K562 (cell line): ENCODE measurements at regions of chr7 and their contacts with region 1.

Region 1: GRCh38 chr7:92634924-92635519 is 44.8 kb upstream of the FAM133B start:
- DNase-seq: peak in 1 of 4 experiments; percentile 43
- ATAC-seq: peak; percentile 41
- H3K4me3 ChIP-seq: no peak overlapping the region
- H3K27ac ChIP-seq: peak overlapping the region; percentile 33; the same call in 2 of the 3 replicates
- H3K4me1 ChIP-seq: peaks cover 0 to 29% of the 10 kb centered on the region in 2 experiments; a peak in 3 of 5 replicates
- H3K27me3 ChIP-seq: no peaks in the 10 kb centered on the region
- CTCF ChIP-seq: no peak
- EP300 ChIP-seq: no peak
- POLR2A ChIP-seq: no peak
- RAD21 ChIP-seq: no peak

Region 2: DNA sequence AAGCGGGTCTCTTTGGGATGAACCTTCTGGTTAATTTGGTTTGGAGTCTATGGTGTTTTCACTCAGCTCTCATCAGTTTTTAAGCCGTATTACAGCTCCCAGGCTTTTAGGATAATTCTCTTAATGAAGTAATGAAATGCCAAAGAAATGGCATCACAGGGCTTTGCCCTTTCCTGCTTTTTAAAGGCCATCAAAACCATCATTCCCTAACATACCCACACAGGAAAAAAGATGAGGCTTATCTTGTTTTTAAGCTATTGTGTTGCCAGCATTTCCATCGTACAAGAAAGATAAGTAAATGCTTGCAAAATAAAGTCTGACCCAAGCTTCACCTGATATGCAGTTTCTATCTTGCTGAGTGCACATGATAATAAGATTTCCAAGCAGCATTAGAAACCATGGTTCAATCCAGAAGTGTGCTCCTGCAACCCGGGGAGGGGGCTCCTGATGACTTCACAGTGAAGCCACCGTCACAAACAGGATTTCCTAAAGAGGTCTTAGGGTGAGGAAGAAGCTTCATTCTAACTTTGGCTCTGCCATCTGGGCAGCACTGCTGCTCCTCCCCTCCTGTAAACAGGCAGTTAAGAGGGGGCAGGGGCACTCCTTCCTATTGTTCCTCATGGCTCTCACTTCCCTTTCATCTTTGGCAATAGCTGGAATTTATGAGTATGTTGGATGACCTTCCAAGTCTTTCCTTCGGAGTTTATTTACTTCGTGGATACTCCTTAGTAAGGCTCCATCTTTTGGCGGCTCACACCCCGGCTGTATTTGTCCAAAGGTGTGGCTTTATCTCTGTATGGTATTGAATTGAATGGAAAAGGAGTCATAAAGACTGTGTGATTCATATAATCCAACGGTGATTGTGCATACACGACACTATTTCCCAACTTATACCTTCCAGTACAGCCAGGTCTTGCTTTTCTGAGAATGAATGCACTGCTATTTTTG is 10.4 kb after region 1 on chr7:
- CTCF ChIA-PET with region 1: no interaction called
- POLR2A ChIA-PET with region 1: interaction called, 10 read pairs
- in situ Hi-C with region 1: no loop called
- intact Hi-C with region 1: no loop called
- DNase-seq: no peak
- ATAC-seq: no peak
- H3K4me3 ChIP-seq: no peak overlapping the region
- H3K27ac ChIP-seq: no peak overlapping the region
- H3K4me1 ChIP-seq: peaks cover 0 to 5% of the 10 kb centered on the region in 2 experiments; a peak in 1 of 5 replicates
- H3K27me3 ChIP-seq: no peaks in the 10 kb centered on the region
- CTCF ChIP-seq: no peak
- EP300 ChIP-seq: no peak
- POLR2A ChIP-seq: no peak
- RAD21 ChIP-seq: no peak